ENCODE measurements at regions of chr5 and their contacts with region 1.

Region 1: DNA sequence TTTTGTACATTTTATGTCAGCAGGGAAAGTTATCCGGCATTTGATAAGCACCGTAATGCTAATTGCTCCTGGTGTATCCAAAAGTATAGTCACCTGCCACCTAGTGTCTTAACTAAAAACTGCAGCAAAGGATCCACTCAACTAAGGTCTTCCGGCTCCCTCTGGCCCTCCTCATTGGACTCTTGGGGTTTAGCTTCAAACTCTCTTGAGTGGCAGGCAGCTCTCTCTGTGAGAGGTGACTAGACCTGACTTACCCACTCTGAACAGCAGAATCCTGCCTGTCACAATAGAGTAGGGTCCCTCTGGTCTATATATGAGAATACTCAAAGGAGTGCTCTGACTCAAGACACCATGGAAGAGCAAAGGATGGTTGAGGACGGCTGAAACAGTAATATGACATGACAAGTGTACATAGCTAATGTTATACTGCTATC is 60.3 kb upstream of the CAST start:
- DNase-seq: peak in 1 of 2 donors; percentile 68
- H3K4me3 ChIP-seq: no peak overlapping the region
- CTCF ChIP-seq: peak in 1 of 3 donors; percentile 46
- POLR2A ChIP-seq: no peak

Region 2: GRCh38 chr5:95781101-95781583 is 820.7 kb before region 1 on chr5:
- intact Hi-C with region 1: loop called (anchors 10 kb)
- DNase-seq: peak; percentile 79 to 95
- H3K4me3 ChIP-seq: no peak overlapping the region
- CTCF ChIP-seq: peak in 1 of 3 donors; percentile 69
- POLR2A ChIP-seq: no peak

Region 3: GRCh38 chr5:95858661-95859326 is 743.0 kb before region 1 on chr5:
- intact Hi-C with region 1: loop called (anchors 10 kb)
- DNase-seq: peak; percentile 87 to 98
- H3K4me3 ChIP-seq: no peak overlapping the region
- CTCF ChIP-seq: peak in 2 of 3 donors; percentile 90 to 98
- POLR2A ChIP-seq: no peak

Region 4: DNA sequence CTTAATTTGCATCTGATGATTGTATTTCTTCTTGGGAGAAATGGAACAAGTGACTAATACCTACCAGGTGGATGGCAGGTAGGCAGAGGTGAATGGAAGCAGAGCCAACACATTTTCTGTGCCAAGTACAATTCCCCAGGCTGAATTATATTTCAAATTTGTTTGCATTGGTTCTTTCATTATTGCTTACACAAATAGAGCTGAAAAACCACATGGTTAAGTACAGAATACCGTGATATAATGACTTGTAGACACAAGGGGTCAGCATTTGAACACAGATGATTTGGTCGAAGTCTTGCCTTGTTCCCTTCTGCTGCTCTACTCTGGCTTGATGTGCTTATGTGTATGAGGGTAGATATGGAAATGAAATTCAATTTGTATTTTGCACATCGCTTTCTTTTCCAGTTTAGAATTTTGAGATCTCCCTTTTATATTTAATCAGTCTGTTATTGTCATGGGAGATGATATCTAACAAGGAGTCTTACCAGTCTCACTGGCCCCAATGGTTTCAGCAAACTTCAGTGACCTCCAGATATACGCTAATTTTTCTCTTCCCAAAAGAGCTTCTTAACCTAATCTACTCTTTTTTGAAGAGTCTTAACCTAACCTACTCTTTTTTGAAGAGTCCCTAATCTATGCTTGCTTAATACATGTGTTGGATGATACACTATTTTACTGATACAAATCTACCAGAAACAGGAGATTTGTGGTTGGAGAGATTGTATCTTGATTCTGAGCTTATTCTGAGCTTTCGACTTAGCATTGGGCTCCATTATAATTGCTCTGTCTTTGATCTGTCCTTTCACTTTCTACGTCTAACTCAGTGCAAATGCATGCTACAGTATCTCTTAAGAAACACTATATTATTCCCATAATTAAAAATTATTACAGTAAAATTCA is 256.9 kb before region 1 on chr5:
- intact Hi-C with region 1: loop called (anchors 5 kb)
- DNase-seq: no peak
- H3K4me3 ChIP-seq: no peak overlapping the region
- CTCF ChIP-seq: no peak
- POLR2A ChIP-seq: no peak

Region 5: DNA sequence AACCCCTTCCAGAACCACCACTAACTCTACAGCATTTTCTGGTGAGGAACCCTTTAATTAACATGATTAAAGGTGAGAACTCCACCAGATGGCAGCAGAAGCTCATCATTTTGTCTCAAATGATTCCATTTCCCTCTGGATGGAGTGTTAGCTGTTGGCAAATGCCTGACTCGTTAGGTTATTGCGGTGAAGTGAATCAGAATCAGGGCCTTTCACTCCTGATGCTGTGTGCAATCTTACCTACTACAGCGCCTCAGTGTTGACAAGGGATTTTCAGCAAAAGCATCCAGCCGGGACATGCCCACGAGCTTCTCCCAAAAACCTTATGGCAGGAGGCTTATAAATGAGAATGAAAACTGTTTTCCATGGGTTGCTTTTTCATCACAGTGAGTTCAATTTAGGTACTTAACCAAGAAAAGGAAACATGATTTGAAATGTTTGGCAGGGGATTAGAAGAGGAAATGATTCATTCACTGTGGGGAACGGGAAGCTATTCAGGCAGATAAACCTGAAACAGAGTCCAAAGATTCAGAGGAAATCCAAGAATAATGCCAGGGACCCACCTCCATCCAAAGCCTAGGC is 12.4 kb after region 1 on chr5:
- intact Hi-C with region 1: no loop called
- DNase-seq: peak in 1 of 2 donors; percentile 71
- H3K4me3 ChIP-seq: no peak overlapping the region
- CTCF ChIP-seq: no peak
- POLR2A ChIP-seq: no peak

Measured in lower leg skin (tissue), 4 donors.